Activated CD4-positive, alpha-beta T cell treated with anti-CD3 and anti-CD28 coated beads for 36 hours (primary cell): ENCODE measurements at regions of chr12 and their contacts with region 1.

Region 1: DNA sequence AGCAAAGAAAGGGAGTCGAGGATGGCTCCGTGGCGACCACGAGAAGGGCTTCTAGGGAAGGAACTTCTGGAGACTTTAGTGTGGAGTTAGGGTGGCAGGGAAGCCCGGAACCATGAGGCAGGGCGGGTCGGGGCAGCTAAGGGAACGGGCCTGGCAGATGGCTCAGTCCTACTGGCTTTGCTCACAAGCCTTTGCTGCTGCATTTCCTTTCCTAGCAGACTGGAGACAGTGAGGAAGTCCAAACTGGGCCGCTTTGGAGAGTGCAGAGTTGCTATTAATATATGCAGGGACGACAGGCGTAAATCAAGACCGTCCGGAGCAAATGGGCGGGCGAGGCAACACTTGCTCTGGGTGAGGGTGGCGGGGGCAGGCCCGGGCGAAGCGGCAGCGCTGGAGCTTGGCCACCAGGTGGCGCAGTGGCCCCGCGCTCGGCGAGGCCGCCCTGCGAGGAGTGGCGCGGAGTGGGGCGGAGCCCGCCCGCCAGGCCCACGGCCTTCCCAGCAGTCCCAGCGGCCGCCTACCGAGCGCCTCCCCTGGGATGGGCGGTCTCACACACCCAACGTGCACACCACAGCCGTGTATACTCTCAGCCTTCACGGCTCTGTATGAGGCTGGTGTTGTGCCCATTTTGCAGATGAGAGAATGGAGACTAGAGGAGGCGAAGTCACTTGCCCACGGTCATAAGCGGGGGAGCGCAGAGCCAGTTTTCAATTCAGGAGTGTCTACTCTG is 24.4 kb upstream of the LRTM2 start:
- DNase-seq: peak; percentile 97
- ATAC-seq: peak; percentile 97
- H3K4me3 Mint-ChIP-seq: peak overlapping the region; percentile 83
- H3K27ac Mint-ChIP-seq: peak overlapping the region; percentile 86
- H3K4me1 Mint-ChIP-seq: peaks cover 15% of the 10 kb centered on the region
- H3K27me3 Mint-ChIP-seq: no peaks in the 10 kb centered on the region

Region 2: GRCh38 chr12:1553987-1554982 is 241.7 kb before region 1 on chr12:
- CTCF ChIA-PET with region 1: no interaction called
- POLR2A ChIA-PET with region 1: no interaction called
- intact Hi-C with region 1: no loop called
- DNase-seq: peak; percentile 80
- ATAC-seq: peak; percentile 95
- H3K4me3 Mint-ChIP-seq: no peak overlapping the region
- H3K27ac Mint-ChIP-seq: no peak overlapping the region
- H3K4me1 Mint-ChIP-seq: peaks cover 15% of the 10 kb centered on the region
- H3K27me3 Mint-ChIP-seq: peaks cover 6% of the 10 kb centered on the region

Region 3: DNA sequence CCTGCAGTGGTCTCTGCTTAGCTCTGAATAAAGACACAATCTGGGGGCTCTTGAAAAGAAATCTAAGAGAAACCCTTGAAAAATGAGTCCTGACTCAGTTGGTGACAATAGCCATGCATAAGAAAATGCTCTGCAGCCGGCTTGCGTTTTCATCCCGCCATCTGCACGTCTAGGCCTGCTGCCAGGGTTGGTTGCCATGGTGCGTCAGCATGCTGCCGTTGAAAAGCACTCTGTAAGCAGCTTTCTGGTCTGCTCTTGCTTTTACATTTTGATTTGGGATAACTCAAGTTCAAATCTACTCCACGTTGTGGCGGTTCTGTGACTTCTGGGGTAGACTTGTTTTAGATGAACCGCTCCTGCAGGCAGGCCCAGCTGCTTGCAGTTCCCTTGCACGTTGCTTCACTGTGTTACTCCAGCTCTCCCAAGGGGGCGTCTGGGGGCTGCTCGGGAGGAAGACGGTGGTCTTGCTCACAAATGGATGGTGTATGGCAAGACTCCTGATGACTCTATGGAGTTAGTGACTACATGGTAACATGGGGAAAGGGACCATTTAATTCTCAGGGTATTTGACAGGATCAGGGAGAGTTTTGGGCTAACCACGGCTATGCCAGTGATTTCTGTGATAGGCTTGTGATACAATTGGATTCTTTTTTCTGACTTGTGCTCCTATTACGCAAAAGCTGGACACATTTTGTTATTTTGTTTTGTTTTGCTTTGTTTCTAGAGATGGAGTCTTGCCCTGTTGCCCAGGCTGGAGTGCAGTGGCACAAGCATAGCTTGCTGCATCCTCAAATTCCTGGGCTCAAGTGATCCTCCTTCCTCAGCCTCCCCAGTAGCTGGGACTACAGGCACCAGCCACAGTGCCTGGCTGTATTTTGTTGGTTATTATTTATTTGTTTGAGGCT is 151.2 kb before region 1 on chr12:
- CTCF ChIA-PET with region 1: interaction called, 246 read pairs
- POLR2A ChIA-PET with region 1: no interaction called
- intact Hi-C with region 1: no loop called
- DNase-seq: no peak
- ATAC-seq: no peak
- H3K4me3 Mint-ChIP-seq: no peak overlapping the region
- H3K27ac Mint-ChIP-seq: no peak overlapping the region
- H3K4me1 Mint-ChIP-seq: peaks cover 2% of the 10 kb centered on the region
- H3K27me3 Mint-ChIP-seq: peaks cover 4% of the 10 kb centered on the region

Region 4: DNA sequence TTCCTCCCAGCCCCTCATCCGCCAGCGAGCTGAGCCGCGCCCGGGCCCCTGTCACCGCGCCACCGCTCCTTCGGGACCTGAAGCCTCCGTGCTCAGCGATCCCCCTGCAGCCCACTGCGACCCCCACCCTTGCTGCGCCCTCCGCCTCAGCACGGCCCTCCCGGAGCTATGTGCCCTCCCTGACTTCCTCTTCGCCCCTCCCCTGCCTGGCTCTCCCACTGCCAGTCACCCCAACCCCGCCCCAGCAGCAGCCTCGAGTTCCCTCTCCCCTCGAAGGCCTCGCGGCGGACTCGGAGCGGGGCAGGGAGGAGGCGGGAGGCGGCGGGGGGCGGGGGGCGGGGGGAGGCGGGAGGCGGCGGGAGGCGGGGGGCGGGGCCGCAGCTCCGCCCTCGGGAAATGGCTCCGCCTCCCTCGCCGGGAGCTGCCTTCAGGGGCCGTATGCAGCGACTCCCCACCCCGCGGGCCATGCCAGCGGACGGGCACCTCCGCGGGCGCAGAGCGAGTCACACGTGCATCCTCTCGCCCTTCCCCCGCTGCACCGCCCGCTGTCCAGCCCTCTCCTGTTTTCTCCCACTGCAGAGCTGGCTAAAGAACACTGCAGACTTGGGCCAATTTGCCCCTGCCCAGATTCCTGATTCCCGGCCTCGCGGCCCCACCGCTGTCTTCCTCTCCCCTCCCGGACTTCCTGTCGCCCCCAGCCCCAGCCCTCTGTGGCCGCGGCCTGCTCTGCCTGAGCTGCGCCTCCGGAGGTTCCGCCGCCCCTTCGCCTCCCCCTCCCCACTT is 134.2 kb before region 1 on chr12:
- CTCF ChIA-PET with region 1: interaction called, 47 read pairs
- POLR2A ChIA-PET with region 1: interaction called, 4 read pairs
- intact Hi-C with region 1: loop called in 1 of 2 experiments (anchors 1 kb)
- DNase-seq: peak; percentile 93
- ATAC-seq: peak; percentile 94
- H3K4me3 Mint-ChIP-seq: peak overlapping the region; percentile 73
- H3K27ac Mint-ChIP-seq: peak overlapping the region; percentile 76
- H3K4me1 Mint-ChIP-seq: peaks cover 36% of the 10 kb centered on the region
- H3K27me3 Mint-ChIP-seq: no peaks in the 10 kb centered on the region

Region 5: DNA sequence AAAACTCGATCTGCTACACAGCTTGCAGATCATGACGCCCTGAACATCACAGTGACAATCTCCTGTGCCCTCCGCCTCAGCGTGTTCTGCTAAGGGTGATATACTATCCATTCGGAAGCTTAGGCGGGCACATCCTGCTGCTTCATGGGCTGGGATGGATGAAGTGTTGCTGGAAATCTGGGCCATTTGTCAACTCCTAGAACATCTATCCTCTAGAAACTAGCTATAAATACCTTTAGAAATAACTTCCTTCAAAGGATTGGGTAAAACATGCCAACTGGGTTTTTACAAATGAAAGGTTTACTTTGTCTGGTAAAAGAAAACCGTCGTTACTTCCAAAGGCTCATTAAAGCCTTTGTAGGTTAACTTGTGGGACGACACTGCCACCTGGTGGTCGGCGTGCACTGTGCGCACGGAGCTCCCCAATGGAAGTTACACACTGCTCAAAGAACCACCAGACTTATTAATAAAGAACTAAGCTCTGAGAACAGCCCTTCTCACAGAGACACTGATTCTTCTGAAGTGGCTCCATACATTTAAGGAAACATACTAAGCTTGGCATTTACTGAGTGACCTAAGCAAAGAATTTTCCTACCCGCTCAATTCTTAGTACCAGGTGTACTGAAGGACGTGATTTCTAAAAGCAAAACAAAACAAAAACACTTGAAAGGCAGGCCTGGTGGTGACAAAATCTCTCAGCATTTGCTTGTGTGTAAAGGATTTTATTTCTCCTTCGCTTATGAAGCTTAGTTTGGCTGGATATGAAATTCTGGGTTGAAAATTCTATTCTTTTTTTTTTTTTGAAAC is 144.1 kb after region 1 on chr12:
- CTCF ChIA-PET with region 1: interaction called, 126 read pairs
- POLR2A ChIA-PET with region 1: interaction called, 6 read pairs
- intact Hi-C with region 1: loop called (anchors 1 kb)
- DNase-seq: peak; percentile 94
- ATAC-seq: peak; percentile 97
- H3K4me3 Mint-ChIP-seq: no peak overlapping the region
- H3K27ac Mint-ChIP-seq: no peak overlapping the region
- H3K4me1 Mint-ChIP-seq: peaks cover 4% of the 10 kb centered on the region
- H3K27me3 Mint-ChIP-seq: no peaks in the 10 kb centered on the region

Region 6: GRCh38 chr12:2034633-2035430 is 238.9 kb after region 1 on chr12:
- CTCF ChIA-PET with region 1: interaction called, 5 read pairs
- POLR2A ChIA-PET with region 1: no interaction called
- intact Hi-C with region 1: loop called (anchors 1 to 2 kb)
- DNase-seq: peak; percentile 93
- ATAC-seq: peak; percentile 100
- H3K4me3 Mint-ChIP-seq: peak overlapping the region; percentile 63
- H3K27ac Mint-ChIP-seq: no peak overlapping the region
- H3K4me1 Mint-ChIP-seq: peaks cover 12% of the 10 kb centered on the region
- H3K27me3 Mint-ChIP-seq: peaks cover 26% of the 10 kb centered on the region

Region 7: GRCh38 chr12:2387103-2387834 is 591.3 kb after region 1 on chr12:
- CTCF ChIA-PET with region 1: no interaction called
- POLR2A ChIA-PET with region 1: no interaction called
- intact Hi-C with region 1: loop called in 1 of 2 experiments (anchors 5 kb)
- DNase-seq: peak; percentile 73
- ATAC-seq: peak; percentile 91
- H3K4me3 Mint-ChIP-seq: no peak overlapping the region
- H3K27ac Mint-ChIP-seq: no peak overlapping the region
- H3K4me1 Mint-ChIP-seq: no peaks in the 10 kb centered on the region
- H3K27me3 Mint-ChIP-seq: peaks cover 9% of the 10 kb centered on the region

Region 8: DNA sequence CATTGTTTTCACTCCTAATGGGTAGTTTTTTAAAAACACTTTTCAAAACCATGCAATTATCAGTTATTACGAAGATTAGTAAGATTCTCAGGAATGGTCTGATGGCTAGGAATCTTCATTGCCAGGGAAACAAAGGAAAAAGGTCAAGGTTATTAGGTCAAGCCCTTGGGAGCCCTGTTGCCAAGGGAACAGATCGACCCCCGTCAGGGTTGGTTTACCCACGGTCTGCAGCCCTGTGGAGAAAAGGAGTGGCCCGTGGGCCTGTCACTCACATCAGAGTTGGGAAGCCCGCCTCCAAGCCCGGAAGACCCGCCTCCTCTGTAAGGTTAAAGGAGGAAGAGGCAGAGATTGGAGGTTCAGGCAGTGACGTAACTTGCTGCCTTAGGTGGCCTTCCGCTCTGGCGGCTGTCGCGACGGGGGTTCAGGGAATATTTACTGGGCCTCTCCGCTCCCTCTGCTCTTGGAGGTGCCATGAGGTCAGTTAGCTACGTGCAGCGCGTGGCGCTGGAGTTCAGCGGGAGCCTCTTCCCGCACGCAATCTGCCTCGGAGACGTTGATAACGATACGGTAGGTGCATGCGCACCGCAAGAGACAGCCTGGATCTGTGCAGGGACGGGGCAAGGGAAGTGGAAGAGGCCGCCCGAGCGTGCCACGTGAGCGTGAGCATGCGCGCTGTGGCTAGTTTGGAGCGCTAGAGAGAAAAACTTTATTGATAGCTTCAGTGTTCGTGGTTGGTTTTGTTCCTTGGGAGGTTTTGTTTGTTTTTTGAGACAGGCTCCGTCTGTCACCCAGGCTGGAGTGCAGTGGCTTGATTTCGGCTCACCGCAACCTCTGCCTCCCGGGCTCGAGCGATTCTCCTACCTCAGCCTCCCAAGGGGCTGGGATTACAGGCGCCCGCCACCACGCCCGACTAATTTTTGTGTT is 1016.6 kb after region 1 on chr12 and contains the start of gene ITFG2:
- CTCF ChIA-PET with region 1: no interaction called
- POLR2A ChIA-PET with region 1: no interaction called
- intact Hi-C with region 1: loop called in 1 of 2 experiments (anchors 5 kb)
- DNase-seq: peak; percentile 98
- ATAC-seq: peak; percentile 96
- H3K4me3 Mint-ChIP-seq: peak within 1 kb of the TSS; percentile 92
- H3K27ac Mint-ChIP-seq: peak within 1 kb of the TSS; percentile 98
- H3K4me1 Mint-ChIP-seq: peaks cover 26% of the 10 kb centered on the region
- H3K27me3 Mint-ChIP-seq: no peaks in the 10 kb centered on the region
- total RNA-seq, gene ITFG2: 28.0 to 35.3 TPM